K562 (cell line): ENCODE measurements at regions of chr15 and their contacts with region 1.

Region 1: DNA sequence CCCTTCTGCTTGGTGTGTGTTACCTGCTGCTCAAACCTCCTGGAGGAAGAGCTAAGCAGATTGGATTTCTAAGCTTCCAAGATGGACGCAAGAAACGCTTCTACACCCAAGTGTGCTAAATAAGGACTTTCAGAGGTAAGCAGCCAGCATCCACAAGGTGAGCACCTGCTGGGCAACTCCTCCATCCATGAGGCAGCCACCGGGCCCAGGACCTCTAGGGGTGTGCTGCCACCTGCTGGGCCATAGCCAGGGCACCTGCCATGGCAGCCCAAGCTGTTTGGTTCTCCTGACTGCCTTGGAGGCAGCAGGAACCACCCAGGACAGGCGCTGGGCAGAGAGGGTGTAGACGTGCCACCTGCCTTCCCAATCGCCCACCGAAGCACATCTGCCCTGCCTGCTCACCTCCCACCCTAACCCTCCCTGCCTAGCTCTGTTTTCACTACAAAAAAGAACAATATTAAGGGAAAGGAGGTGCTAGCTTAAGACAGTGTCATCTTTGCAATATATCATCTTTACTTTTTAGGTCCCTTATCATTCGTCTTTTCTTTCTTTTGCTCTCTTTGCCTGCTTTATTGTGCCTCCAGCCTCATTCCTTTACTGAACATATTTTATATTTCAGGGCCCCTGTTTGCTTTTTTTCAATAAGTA is 12.9 kb downstream of the C15orf62 start:
- DNase-seq: peak; percentile 40 to 70 (median 58)
- ATAC-seq: peak; percentile 99
- H3K4me3 ChIP-seq: no peak overlapping the region
- H3K27ac ChIP-seq: no peak overlapping the region
- H3K4me1 ChIP-seq: peaks cover 3 to 4% of the 10 kb centered on the region in 2 experiments; a peak in 2 of 5 replicates
- H3K27me3 ChIP-seq: no peaks in the 10 kb centered on the region
- CTCF ChIP-seq: peak; percentile 85 to 90 (median 90)
- EP300 ChIP-seq: no peak
- POLR2A ChIP-seq: no peak
- RAD21 ChIP-seq: peak; percentile 88 to 90

Region 2: GRCh38 chr15:40029979-40030893 is 752.5 kb before region 1 on chr15:
- CTCF ChIA-PET with region 1: no interaction called
- POLR2A ChIA-PET with region 1: no interaction called
- in situ Hi-C with region 1: no loop called
- intact Hi-C with region 1: no loop called
- DNase-seq: peak; percentile 37 to 59 (median 40)
- ATAC-seq: peak; percentile 92
- H3K4me3 ChIP-seq: no peak overlapping the region
- H3K27ac ChIP-seq: no peak overlapping the region
- H3K4me1 ChIP-seq: no peaks in the 10 kb centered on the region
- H3K27me3 ChIP-seq: no peaks in the 10 kb centered on the region
- CTCF ChIP-seq: peak; percentile 67 to 78 (median 74)
- EP300 ChIP-seq: no peak
- POLR2A ChIP-seq: no peak
- RAD21 ChIP-seq: peak in 1 of 2 experiments; percentile 60; a peak in 3 of 4 replicates

Region 3: DNA sequence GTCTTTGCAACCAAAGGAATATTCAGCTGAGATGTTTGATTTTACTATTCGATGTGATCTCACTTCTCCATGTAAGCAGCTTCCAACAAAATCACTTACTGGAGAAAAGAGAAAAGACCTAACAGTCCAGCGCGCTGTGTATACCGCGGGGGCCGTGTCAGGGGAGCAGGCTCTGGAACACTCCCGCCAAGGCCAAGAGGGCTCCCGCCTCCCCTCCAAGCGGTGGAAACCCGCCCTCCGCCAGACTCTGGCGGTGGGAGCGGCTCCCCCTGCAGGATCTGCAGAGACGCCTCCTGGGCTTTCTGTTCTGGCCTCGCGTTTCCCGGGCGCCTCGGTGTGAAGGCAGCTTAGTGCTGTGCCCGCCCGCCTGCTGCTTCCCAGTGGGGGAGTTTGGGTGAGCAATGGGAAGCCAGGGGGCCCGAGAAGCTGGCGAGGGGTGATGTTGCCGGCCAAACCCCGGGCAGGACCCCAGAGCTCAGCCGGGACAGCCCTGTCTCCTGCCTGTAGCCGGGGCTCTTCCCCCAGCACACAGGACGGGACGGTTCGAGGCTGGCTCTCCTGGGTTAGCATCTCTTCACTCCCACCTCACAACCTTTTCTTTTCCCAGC is 275.6 kb before region 1 on chr15:
- CTCF ChIA-PET with region 1: no interaction called
- POLR2A ChIA-PET with region 1: no interaction called
- in situ Hi-C with region 1: no loop called
- intact Hi-C with region 1: loop called (anchors 10 kb)
- DNase-seq: peak; percentile 78 to 93 (median 86)
- ATAC-seq: peak; percentile 93
- H3K4me3 ChIP-seq: no peak overlapping the region
- H3K27ac ChIP-seq: peak overlapping the region; percentile 34; the same call in 1 of the 3 replicates
- H3K4me1 ChIP-seq: peaks cover 19 to 20% of the 10 kb centered on the region in 2 experiments
- H3K27me3 ChIP-seq: no peaks in the 10 kb centered on the region
- CTCF ChIP-seq: peak; percentile 81 to 94 (median 89)
- EP300 ChIP-seq: peak; percentile 32; the same call in 1 of the 2 replicates
- POLR2A ChIP-seq: peak; percentile 49
- RAD21 ChIP-seq: peak; percentile 47 to 80

Region 4: DNA sequence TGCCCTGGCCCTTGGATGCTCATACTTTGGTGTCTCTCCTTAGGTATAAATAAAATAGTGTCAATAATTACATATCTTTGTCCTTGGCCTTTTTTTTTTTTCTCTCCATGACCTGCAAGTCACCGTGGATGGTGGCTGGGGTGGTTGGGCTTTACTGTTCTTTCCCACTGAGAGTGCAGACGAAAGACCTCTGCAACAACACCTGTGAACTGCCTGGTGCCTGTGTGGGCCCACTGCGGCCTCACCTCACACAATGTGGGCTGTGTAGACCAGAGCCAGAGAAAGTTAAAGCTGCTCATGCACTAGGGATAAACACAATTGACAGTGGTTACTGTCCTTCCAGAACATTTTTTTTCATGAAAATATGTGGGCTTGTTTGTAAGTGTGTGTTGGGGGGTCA is 256.8 kb before region 1 on chr15:
- CTCF ChIA-PET with region 1: interaction called, 17 read pairs
- POLR2A ChIA-PET with region 1: no interaction called
- in situ Hi-C with region 1: no loop called
- intact Hi-C with region 1: no loop called
- DNase-seq: no peak
- ATAC-seq: no peak
- H3K4me3 ChIP-seq: no peak overlapping the region
- H3K27ac ChIP-seq: no peak overlapping the region
- H3K4me1 ChIP-seq: peaks cover 0 to 4% of the 10 kb centered on the region in 2 experiments; a peak in 3 of 5 replicates
- H3K27me3 ChIP-seq: no peaks in the 10 kb centered on the region
- CTCF ChIP-seq: no peak
- EP300 ChIP-seq: no peak
- POLR2A ChIP-seq: no peak
- RAD21 ChIP-seq: no peak

Region 5: GRCh38 chr15:40640789-40641188 is 141.9 kb before region 1 on chr15:
- CTCF ChIA-PET with region 1: no interaction called
- POLR2A ChIA-PET with region 1: no interaction called
- in situ Hi-C with region 1: no loop called
- intact Hi-C with region 1: no loop called
- DNase-seq: no peak
- ATAC-seq: no peak
- H3K4me3 ChIP-seq: no peak overlapping the region
- H3K27ac ChIP-seq: no peak overlapping the region
- H3K4me1 ChIP-seq: no peaks in the 10 kb centered on the region
- H3K27me3 ChIP-seq: no peaks in the 10 kb centered on the region
- CTCF ChIP-seq: no peak
- EP300 ChIP-seq: no peak
- POLR2A ChIP-seq: no peak
- RAD21 ChIP-seq: no peak

Region 6: GRCh38 chr15:40684381-40684780 is 98.3 kb before region 1 on chr15:
- CTCF ChIA-PET with region 1: interaction called, 17 read pairs
- POLR2A ChIA-PET with region 1: interaction called, 3 read pairs
- in situ Hi-C with region 1: no loop called
- intact Hi-C with region 1: loop called (anchors 5 kb)
- DNase-seq: no peak
- ATAC-seq: no peak
- H3K4me3 ChIP-seq: no peak overlapping the region
- H3K27ac ChIP-seq: no peak overlapping the region
- H3K4me1 ChIP-seq: no peaks in the 10 kb centered on the region
- H3K27me3 ChIP-seq: no peaks in the 10 kb centered on the region
- CTCF ChIP-seq: no peak
- EP300 ChIP-seq: no peak
- POLR2A ChIP-seq: no peak
- RAD21 ChIP-seq: no peak

Region 7: GRCh38 chr15:40746916-40747514 is 35.7 kb before region 1 on chr15:
- CTCF ChIA-PET with region 1: interaction called, 5 read pairs
- POLR2A ChIA-PET with region 1: interaction called, 3 read pairs
- in situ Hi-C with region 1: no loop called
- intact Hi-C with region 1: loop called (anchors 2 kb)
- DNase-seq: peak in 1 of 4 experiments; percentile 16
- ATAC-seq: peak; percentile 72
- H3K4me3 ChIP-seq: no peak overlapping the region
- H3K27ac ChIP-seq: peak overlapping the region; percentile 45; the same call in 2 of the 3 replicates
- H3K4me1 ChIP-seq: peaks cover 51 to 53% of the 10 kb centered on the region in 2 experiments
- H3K27me3 ChIP-seq: no peaks in the 10 kb centered on the region
- CTCF ChIP-seq: no peak
- EP300 ChIP-seq: peak; percentile 9; the same call in 1 of the 2 replicates
- POLR2A ChIP-seq: no peak
- RAD21 ChIP-seq: no peak

Region 8: DNA sequence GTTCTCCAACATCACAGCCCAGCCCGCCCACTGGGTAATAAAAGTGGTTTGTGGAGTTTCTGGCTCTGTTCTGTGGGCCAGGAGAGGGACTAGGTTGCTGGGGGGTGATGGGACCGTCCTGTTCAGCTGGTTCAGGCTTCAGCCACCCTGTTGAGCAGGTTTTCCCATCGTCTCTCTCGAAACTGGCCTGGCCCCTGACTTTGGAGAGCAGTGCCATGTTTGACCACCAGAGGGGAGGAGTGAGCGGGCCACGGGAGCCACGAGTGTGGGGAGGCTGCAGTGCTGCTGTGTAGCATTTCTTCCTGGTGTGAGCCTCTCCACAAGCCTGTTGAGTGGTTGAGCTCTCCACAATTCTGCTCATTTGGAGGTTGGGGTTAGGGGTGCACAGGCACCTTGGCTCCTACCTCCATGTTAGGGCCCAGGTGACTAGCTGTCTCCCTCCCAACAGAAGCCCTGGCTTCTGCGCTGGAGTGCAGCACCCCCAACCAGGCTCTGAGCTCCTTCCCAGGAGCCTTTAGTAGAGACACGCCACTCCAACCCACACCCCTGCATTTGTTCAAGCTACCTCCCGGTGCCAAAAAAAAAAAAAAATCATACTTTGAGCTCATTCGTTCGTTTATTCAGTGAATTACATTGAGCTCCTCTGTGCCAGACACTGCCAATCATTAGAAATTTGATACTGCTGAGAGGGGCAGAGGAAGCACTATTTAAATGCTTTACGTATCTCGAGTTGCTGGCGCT is 75.1 kb after region 1 on chr15:
- CTCF ChIA-PET with region 1: interaction called, 4 read pairs
- POLR2A ChIA-PET with region 1: no interaction called
- in situ Hi-C with region 1: no loop called
- intact Hi-C with region 1: loop called (anchors 5 kb)
- DNase-seq: peak; percentile 83 to 89 (median 84)
- ATAC-seq: peak; percentile 92
- H3K4me3 ChIP-seq: no peak overlapping the region
- H3K27ac ChIP-seq: no peak overlapping the region
- H3K4me1 ChIP-seq: peaks cover 16 to 25% of the 10 kb centered on the region in 2 experiments; a peak in 4 of 5 replicates
- H3K27me3 ChIP-seq: no peaks in the 10 kb centered on the region; a peak in 1 of 5 replicates
- CTCF ChIP-seq: peak; percentile 94 to 98 (median 95)
- EP300 ChIP-seq: no peak
- POLR2A ChIP-seq: no peak
- RAD21 ChIP-seq: peak; percentile 74 to 86

Region 9: GRCh38 chr15:40879604-40880003 is 96.9 kb after region 1 on chr15:
- CTCF ChIA-PET with region 1: no interaction called
- POLR2A ChIA-PET with region 1: no interaction called
- in situ Hi-C with region 1: no loop called
- intact Hi-C with region 1: no loop called
- DNase-seq: peak in 2 of 4 experiments; percentile 41 to 55
- ATAC-seq: peak; percentile 82
- H3K4me3 ChIP-seq: no peak overlapping the region
- H3K27ac ChIP-seq: no peak overlapping the region
- H3K4me1 ChIP-seq: peaks cover 0 to 10% of the 10 kb centered on the region in 2 experiments; a peak in 3 of 5 replicates
- H3K27me3 ChIP-seq: no peaks in the 10 kb centered on the region
- CTCF ChIP-seq: no peak
- EP300 ChIP-seq: no peak
- POLR2A ChIP-seq: no peak
- RAD21 ChIP-seq: no peak